Prostate gland (tissue), 2 donors: ENCODE measurements at regions of chr11 and their contacts with region 1.

Region 1: DNA sequence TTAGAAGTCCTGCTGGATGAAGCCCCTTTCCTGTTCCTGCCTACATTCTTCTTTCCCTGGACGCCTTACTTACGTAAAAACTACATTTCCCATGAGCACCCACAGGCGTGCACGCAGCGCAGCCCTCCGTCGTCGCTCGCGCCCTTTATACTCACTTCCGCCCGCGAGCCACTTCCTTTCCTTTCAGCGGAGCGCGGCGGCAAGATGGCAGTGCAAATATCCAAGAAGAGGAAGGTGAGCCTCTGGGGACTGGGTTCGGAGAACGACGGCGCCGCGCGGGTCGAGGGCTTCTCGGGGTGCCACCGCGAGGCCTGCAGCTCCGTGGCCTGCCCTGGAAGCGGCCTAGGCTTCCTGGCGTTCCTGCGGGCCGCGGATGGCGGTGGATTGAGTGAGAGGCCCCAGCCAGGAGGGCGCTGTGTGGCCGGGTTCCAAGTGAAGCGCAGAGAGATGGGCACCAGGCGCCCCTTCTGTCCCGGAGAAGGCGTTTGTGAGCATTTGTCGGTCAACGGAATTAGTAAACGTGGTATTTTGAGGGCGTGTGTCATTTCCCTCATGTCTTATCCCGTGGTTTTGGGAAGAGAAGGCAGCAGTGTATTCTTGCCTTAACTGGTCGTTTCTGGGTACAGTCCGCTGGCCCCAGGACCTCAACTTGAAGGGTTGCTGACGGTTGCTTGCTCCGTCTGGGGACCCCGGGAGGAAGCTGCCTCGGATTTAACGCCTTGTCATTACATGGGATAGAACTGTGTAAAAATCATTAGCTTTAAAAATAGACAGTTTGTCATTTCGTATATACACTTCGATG is at the start of gene RPS3:
- DNase-seq: peak; percentile 92
- H3K4me3 ChIP-seq: peak within 1 kb of the TSS; percentile 50 to 68
- H3K27ac ChIP-seq: peak within 1 kb of the TSS; percentile 69 to 87
- H3K4me1 ChIP-seq: no peaks in the 10 kb centered on the region
- H3K27me3 ChIP-seq: no peaks in the 10 kb centered on the region
- CTCF ChIP-seq: peak in 3 of 4 experiments; percentile 20 to 40 (median 35)
- POLR2A ChIP-seq: peak; percentile 85
- total RNA-seq, gene RPS3: 890 to 1,636 TPM

Region 2: DNA sequence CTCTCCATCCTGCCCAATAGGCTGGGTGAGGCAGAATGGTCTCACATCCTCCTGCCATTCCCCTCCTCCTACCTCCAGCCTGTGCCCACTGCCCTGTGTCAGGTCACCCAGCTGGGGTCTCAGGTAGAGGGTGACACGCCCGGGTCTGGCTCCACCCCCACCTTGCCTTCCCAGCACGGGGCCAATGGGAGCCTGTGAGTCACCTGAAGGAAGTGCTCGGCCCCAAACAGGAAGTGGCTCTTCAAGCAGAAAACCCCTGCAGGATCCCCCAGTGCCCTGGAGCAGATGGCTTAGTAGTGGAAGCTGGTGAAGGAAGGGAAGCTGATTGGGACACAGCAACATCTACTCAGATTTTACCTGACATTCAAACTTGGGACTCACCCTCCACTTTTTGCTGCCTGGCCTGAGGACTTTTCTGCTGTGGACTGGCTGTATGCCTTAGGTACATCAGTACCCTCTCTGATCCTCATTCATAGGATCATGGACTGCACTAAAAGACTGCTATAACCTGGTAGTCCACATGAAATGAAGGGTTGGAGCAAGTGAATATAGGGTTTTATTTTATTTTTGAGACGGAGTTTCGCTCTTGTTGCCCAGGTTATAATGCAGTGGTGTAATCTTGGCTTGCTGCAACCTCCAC is 92.8 kb after region 1 on chr11:
- intact Hi-C with region 1: no loop called
- DNase-seq: no peak
- H3K4me3 ChIP-seq: no peak overlapping the region
- H3K27ac ChIP-seq: no peak overlapping the region
- H3K4me1 ChIP-seq: no peaks in the 10 kb centered on the region
- H3K27me3 ChIP-seq: no peaks in the 10 kb centered on the region
- CTCF ChIP-seq: no peak
- POLR2A ChIP-seq: no peak

Region 3: GRCh38 chr11:75525596-75526541 is 126.3 kb after region 1 on chr11 and contains the start of gene GDPD5:
- intact Hi-C with region 1: loop called (anchors 5 kb)
- DNase-seq: peak; percentile 78
- H3K4me3 ChIP-seq: peak within 1 kb of the TSS; percentile 56
- H3K27ac ChIP-seq: peak within 1 kb of the TSS; percentile 39 to 52
- H3K4me1 ChIP-seq: peaks cover 2% of the 10 kb centered on the region
- H3K27me3 ChIP-seq: no peaks in the 10 kb centered on the region
- CTCF ChIP-seq: peak; percentile 59 to 79 (median 65)
- POLR2A ChIP-seq: peak; percentile 43
- total RNA-seq, gene GDPD5: 1.7 to 14.6 TPM

Region 4: DNA sequence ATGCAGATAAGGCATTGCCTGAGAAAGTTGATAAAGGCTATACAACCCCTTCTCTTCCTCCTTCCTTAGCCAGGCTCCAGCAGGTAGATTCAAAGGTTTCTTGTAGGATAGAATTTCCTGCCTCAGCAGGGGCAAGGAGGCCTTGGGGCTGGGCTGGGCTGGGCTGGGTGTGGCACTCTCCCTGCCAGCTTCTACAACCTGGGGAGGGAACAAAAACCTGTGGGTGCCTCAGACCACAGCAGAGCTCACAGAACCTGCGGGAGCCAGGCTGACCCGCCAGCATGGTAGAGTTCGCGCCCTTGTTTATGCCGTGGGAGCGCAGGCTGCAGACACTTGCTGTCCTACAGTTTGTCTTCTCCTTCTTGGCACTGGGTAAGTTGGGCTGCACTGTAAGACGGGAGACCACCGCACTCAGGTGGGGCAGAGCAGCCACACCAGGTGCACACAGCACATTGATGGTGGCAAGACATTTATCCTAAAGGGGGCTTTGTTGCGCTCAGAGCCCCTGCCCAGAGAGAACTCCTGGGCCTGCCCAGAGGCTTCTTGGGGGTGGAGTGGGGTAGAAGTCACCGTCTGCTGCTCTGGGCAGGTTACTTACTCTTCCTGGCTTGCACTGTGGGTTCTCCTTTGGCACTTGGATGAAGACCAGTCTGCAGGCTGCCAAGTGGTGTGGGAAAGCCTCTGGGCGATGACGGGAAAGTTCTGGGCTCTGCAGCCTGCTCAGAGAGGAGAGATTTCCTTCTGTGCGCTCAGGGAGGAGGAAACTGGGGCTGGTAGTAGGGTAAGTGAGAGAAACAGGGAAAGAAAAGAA is 318.3 kb after region 1 on chr11 and contains the start of gene MOGAT2:
- intact Hi-C with region 1: no loop called
- DNase-seq: peak; percentile 50
- H3K4me3 ChIP-seq: no peak within 1 kb of the TSS
- H3K27ac ChIP-seq: peak within 1 kb of the TSS; percentile 70 to 88
- H3K4me1 ChIP-seq: peaks cover 4% of the 10 kb centered on the region
- H3K27me3 ChIP-seq: no peaks in the 10 kb centered on the region
- CTCF ChIP-seq: no peak
- POLR2A ChIP-seq: no peak
- total RNA-seq, gene MOGAT2: 0.62 to 4.1 TPM